ENCODE measurements at regions of chr1 and their contacts with region 1.

Region 1: DNA sequence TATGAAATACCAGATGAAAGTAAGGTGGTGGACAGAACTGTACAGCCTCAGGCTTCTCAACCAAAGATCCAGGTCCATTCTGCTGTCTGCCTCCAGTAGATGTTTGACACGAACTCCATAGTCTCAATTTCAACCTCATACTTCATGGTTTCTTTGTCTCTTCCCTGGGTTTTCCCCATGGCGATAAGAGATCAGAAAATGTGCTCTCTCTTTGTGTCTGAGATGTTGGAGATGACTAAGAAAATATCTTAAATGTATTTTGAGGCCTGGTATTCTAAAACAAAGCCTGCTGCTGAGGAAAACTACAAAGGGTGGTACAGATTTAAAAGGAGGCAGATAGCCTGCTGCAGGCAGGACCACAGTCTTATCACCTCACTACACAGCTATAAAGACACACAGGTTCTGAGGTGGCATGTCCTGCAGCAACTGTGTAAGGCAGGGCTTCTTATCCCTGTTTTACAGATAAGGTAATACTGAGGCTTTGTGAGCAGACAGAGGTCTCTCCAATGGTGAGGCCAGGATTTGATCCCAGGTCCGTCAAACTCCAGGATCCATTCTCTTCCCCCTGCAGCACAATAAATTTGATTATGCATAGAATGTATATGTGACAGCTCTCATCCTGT is 40.0 kb upstream of the CACNA1E start:
- DNase-seq: no peak
- H3K4me3 ChIP-seq: no peak overlapping the region
- H3K27ac ChIP-seq: no peak overlapping the region
- H3K4me1 ChIP-seq: peaks cover 0 to 4% (median 2%) of the 10 kb centered on the region in 4 donors
- H3K27me3 ChIP-seq: no peaks in the 10 kb centered on the region
- CTCF ChIP-seq: no peak
- EP300 ChIP-seq: no peak
- POLR2A ChIP-seq: no peak

Region 2: DNA sequence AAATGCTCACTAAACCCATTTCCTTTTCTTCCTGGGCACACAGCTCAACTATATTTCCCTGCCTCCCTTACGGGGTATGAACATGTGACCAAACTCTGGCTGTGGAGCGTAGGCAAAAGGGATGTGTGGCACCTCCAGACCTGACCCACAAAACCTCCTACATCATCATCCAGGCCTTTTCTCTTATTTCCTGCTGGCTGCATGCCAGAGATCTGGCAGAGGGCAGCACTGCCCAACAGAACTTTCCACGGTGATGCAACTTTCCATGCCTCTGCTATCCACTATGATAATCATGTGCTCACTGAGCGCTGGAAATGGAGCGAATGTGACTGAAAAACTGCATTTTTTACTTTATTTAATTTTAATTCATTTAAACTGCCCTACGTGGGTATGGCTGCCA is 59.6 kb before region 1 on chr1:
- in situ Hi-C with region 1: loop called in 1 of 4 experiments (anchors 10 kb)
- intact Hi-C with region 1: no loop called
- DNase-seq: no peak
- H3K4me3 ChIP-seq: no peak overlapping the region
- H3K27ac ChIP-seq: no peak overlapping the region
- H3K4me1 ChIP-seq: no peaks in the 10 kb centered on the region
- H3K27me3 ChIP-seq: no peaks in the 10 kb centered on the region
- CTCF ChIP-seq: no peak
- EP300 ChIP-seq: no peak
- POLR2A ChIP-seq: no peak

Region 3: GRCh38 chr1:182215764-182216163 is 772.4 kb after region 1 on chr1:
- in situ Hi-C with region 1: no loop called
- intact Hi-C with region 1: no loop called
- DNase-seq: no peak
- H3K4me3 ChIP-seq: no peak overlapping the region
- H3K27ac ChIP-seq: peak overlapping the region; percentile 62 to 80 (median 71)
- H3K4me1 ChIP-seq: peaks cover 7 to 37% (median 26%) of the 10 kb centered on the region in 4 donors
- H3K27me3 ChIP-seq: no peaks in the 10 kb centered on the region
- CTCF ChIP-seq: no peak
- EP300 ChIP-seq: no peak
- POLR2A ChIP-seq: no peak

Measured in transverse colon (tissue), 4 donors.